ENCODE measurements at regions of chr10 and their contacts with region 1.

Region 1: DNA sequence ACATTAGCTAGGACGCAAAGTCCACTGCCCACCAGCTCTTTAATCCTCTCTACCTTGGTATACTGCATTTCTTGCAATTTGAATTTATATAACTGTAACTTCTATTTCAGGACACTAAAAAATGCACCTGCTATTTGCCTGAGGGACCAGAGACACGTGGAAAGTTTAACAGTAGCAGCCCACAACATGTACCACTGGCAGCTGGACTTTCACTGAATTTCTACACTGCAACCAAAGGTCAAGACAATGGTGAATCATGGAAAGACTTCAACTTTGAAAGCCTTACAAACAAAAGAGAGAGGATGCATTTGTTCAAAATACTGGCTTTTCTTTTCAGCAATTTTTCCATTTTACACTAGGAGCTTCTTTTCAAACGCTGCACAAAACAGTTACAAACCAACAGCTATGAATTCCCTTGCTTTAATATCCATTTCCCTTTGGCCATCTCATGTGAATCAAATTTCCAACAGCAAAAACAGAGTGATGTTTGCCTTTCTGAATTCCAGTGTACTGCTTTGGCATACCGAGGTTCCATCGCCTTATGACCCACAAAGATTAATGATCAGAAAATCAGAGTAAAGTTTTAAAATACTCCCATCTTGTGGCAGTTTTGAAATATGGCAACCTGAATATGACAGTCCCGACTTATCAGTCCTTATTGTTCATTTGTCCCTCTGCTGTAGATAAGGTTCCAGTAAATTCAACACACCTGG is 29.9 kb upstream of the HNRNPH3 start:
- DNase-seq: peak; percentile 45
- CTCF ChIP-seq: peak; percentile 42

Region 2: DNA sequence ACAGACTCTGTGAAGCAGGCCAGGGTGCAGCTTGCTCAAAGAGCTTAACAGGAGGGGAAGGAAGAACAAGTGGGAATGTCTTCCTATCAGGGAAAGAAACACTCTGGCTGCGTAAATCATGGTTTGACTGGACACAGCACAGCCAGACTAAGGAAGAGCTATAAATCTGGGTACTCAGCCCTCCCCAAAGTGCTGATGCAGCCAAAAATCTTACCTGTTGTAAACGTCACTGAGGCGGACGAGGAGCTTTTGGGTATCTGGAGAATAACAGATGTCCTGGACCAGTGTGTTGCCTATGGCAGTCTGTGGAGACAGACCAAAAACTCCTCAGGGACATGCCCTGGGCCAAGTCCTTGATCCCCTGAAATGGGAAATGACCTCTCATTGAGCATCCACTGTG is 13.2 kb before region 1 on chr10:
- CTCF ChIA-PET with region 1: interaction called, 30 read pairs
- POLR2A ChIA-PET with region 1: no interaction called
- DNase-seq: no peak
- CTCF ChIP-seq: no peak

Region 3: DNA sequence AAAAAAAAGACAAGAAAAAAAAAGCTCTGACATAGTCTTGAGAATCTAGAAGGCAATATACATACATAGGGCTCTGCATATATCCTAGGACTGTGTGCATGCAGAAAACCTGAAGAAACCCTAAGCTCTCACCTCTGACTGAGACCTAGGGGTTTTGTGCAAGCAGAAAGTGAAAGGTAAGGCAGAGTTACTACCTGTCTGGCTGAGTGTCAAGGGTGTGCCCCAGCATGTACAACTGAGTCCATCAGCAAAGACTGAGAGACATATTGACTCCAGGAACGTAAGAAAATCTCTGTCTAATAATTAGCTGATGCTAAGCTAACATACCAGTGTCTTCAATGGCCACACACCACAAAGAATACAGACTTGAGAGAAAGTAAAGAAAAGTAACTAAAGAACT is 13.6 kb after region 1 on chr10:
- CTCF ChIA-PET with region 1: interaction called, 31 read pairs
- POLR2A ChIA-PET with region 1: no interaction called
- DNase-seq: no peak
- CTCF ChIP-seq: no peak

Measured in GM10248 (cell line).